ENCODE measurements at regions of chr4 and their contacts with region 1.

Region 1: GRCh38 chr4:109912706-109913595 is at the start of gene EGF:
- DNase-seq: no peak
- H3K4me3 ChIP-seq: peak within 1 kb of the TSS; percentile 45; the same call in 1 of the 2 replicates
- H3K27ac ChIP-seq: peak within 1 kb of the TSS; percentile 58; the same call in 1 of the 2 replicates
- H3K4me1 ChIP-seq: peaks cover 9% of the 10 kb centered on the region; the same call in 1 of the 2 replicates
- H3K27me3 ChIP-seq: no peaks in the 10 kb centered on the region
- CTCF ChIP-seq: no peak
- total RNA-seq, gene EGF: 19.6 and 20.4 TPM in 2 replicates

Region 2: DNA sequence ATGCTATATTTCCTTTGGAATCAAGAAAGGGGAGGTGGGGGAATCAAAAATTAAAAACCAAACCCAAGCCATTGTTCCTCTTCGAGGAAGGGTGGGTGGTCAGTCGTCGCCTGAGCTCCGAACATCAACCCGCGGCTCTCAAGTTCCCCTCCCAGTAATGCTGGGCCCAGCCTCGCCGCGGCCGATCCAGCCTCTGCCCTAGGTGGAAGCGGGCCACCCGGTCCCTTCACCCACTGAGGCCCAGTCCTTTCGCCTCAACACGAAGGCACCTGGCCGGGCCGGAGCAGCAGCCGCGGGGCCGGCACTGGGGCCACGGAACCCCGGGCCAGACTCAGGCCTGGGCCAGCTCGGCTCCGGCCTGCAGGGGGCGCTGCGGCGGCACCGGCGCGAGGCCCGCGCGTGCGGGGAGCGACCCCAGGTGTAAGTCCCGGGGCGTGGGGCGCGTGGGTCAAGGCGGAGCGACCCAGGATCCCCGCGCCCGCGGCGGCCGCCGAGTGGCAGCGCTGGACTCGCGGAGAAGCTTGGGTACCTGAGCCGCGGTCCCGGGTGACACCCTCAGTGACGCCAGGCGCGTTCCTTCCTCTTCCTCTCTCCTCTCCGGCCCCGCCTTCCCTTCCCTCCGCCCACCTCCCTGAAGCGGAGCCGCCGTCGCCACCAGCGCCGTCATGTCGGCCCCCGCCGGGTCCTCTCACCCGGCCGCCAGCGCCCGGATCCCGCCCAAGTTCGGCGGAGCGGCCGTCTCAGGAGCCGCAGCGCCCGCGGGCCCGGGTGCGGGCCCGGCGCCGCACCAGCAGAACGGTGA is 479.5 kb before region 1 on chr4 and contains the start of gene SEC24B:
- CTCF ChIA-PET with region 1: no interaction called
- POLR2A ChIA-PET with region 1: no interaction called
- intact Hi-C with region 1: loop called (anchors 5 kb)
- DNase-seq: peak; percentile 57 to 75
- H3K4me3 ChIP-seq: peak within 1 kb of the TSS; percentile 79
- H3K27ac ChIP-seq: peak within 1 kb of the TSS; percentile 25
- H3K4me1 ChIP-seq: peaks cover 21% of the 10 kb centered on the region
- H3K27me3 ChIP-seq: no peaks in the 10 kb centered on the region
- CTCF ChIP-seq: peak; percentile 62
- total RNA-seq, gene SEC24B: 14.3 and 21.7 TPM in 2 replicates

Region 3: GRCh38 chr4:109967797-109968507 is 55.0 kb after region 1 on chr4:
- CTCF ChIA-PET with region 1: no interaction called
- POLR2A ChIA-PET with region 1: interaction called, 5 read pairs
- intact Hi-C with region 1: loop called (anchors 5 kb)
- DNase-seq: peak; percentile 20 to 92
- H3K4me3 ChIP-seq: peak overlapping the region; percentile 49
- H3K27ac ChIP-seq: peak overlapping the region; percentile 96
- H3K4me1 ChIP-seq: peaks cover 37% of the 10 kb centered on the region
- H3K27me3 ChIP-seq: no peaks in the 10 kb centered on the region
- CTCF ChIP-seq: no peak